ENCODE measurements at regions of chr3 and their contacts with region 1.

Region 1: DNA sequence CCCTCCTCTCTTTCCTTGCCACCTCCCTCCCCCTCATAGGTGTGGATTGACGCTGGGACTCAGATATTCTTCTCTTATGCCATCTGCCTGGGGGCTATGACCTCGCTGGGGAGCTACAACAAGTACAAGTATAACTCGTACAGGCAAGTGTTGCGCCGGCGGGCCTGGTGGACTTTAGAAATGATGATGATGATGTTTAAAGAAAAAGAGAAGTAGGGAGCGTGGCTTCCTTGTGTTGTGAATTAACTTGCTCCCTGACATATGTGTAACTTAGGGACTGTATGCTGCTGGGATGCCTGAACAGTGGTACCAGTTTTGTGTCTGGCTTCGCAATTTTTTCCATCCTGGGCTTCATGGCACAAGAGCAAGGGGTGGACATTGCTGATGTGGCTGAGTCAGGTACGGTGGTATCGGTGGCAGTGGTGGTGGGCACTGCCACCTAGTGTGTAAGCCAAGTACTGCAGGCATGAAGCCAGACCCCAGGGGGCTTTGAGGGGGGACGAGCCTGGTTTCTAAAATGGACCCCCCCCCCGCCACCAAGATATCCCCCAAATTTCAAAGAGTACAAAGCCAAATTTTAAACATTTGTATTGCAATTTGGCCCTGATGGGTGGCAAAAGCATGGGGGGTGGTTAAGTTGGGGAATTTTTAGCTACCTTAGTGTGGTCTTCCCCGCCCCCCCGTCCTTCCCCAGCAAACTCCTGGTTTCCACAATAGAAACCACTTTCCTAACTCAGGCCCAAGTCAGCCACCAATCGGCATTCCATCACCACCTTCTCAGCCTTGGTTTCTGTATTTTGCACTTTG is 65.6 kb downstream of the SLC6A6 start:
- DNase-seq: peak; percentile 92
- H3K4me3 ChIP-seq: peak overlapping the region in 1 of 2 experiments; percentile 23; a peak in 1 of 4 replicates
- H3K27ac ChIP-seq: no peak overlapping the region
- H3K4me1 ChIP-seq: peaks cover 4 to 19% of the 10 kb centered on the region in 2 experiments; a peak in 3 of 4 replicates
- H3K27me3 ChIP-seq: no peaks in the 10 kb centered on the region
- CTCF ChIP-seq: peak; percentile 95
- EP300 ChIP-seq: no peak
- RAD21 ChIP-seq: peak; percentile 93

Region 2: DNA sequence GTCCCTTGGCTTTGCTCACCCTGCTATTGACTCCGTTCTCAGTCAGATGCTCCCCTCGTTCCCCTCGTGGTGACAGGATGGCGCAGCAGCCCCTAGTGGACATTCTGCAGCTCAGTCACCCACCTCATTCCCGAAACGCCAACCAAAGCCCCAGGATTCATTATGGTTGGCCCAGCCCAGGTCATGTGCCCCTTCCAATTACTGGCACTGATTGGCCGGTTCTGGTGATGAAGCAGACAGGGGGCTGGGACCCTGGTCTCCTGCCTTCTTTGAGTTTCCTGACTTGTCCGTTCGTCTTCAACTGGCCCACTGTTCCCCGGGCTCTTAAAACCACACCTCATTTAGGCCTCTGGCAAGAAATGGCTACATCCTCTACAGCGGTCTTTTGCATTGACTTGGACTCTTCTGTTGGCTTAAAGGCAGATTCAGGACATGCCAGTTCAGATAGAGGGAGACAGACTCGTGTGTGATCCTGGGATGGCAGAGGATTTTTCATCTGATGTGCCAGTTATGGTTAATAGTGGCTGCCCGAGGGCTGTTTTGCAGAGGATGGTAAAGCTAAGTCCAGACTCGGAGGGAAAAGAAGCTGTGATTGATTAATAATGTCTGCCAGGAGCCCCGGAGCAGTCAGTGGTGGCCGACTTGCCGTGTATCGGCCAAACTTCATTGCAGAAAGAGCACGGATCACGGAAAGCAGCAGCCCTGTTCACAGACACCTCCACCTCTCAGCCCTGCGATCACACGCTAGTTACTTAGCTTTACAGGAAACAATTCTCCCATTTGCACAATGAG is 251.6 kb before region 1 on chr3:
- CTCF ChIA-PET with region 1: interaction called, 34 read pairs
- POLR2A ChIA-PET with region 1: no interaction called
- DNase-seq: peak; percentile 85
- H3K4me3 ChIP-seq: peak overlapping the region; percentile 50 to 55
- H3K27ac ChIP-seq: peak overlapping the region; percentile 52 to 96
- H3K4me1 ChIP-seq: peaks cover 0 to 4% of the 10 kb centered on the region in 2 experiments; a peak in 1 of 4 replicates
- H3K27me3 ChIP-seq: no peaks in the 10 kb centered on the region
- CTCF ChIP-seq: peak; percentile 60
- EP300 ChIP-seq: no peak; a peak in 1 of 4 replicates
- RAD21 ChIP-seq: peak; percentile 69

Region 3: DNA sequence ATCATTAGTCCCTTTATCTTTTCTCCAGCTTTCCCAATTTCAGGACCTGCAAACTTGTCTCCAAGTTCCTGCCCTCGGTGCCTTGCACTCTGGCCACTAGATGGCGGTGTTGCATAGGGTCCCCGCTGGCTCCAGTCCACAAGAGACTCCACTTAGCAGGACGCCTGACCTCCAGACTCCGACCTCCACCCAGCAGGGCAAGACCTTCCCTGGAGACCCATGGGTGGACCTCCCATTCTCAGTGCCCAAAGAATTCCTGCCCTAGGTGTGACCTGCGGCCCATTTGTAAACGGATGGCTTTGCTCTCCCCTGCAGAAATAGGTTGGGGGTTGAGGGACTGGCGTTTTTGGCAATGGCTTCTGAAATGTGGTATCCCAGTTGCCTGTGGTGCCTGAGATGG is 206.8 kb before region 1 on chr3:
- CTCF ChIA-PET with region 1: interaction called, 105 read pairs
- POLR2A ChIA-PET with region 1: no interaction called
- DNase-seq: peak; percentile 88
- H3K4me3 ChIP-seq: peak overlapping the region in 1 of 2 experiments; percentile 42; a peak in 1 of 4 replicates
- H3K27ac ChIP-seq: no peak overlapping the region
- H3K4me1 ChIP-seq: no peaks in the 10 kb centered on the region
- H3K27me3 ChIP-seq: 0 out of 2 replicates have a peak, but pooled peaks cover 6% of the 10 kb centered on the region
- CTCF ChIP-seq: peak; percentile 98
- EP300 ChIP-seq: no peak
- RAD21 ChIP-seq: peak; percentile 99

Region 4: GRCh38 chr3:14439579-14440518 is 28.2 kb before region 1 on chr3:
- CTCF ChIA-PET with region 1: interaction called, 10 read pairs
- POLR2A ChIA-PET with region 1: no interaction called
- DNase-seq: peak; percentile 87
- H3K4me3 ChIP-seq: no peak overlapping the region
- H3K27ac ChIP-seq: peak overlapping the region; percentile 1 to 3; a peak in 2 of 4 replicates
- H3K4me1 ChIP-seq: peaks cover 41 to 43% of the 10 kb centered on the region in 2 experiments
- H3K27me3 ChIP-seq: no peaks in the 10 kb centered on the region
- CTCF ChIP-seq: no peak
- EP300 ChIP-seq: peak in 1 of 2 experiments; percentile 54; a peak in 1 of 4 replicates
- RAD21 ChIP-seq: 0 out of 2 replicates have a peak, but pooled peaks have one; percentile 13

Region 5: GRCh38 chr3:14480207-14481025 is 12.4 kb after region 1 on chr3:
- CTCF ChIA-PET with region 1: interaction called, 43 read pairs
- POLR2A ChIA-PET with region 1: no interaction called
- DNase-seq: peak; percentile 53
- H3K4me3 ChIP-seq: no peak overlapping the region
- H3K27ac ChIP-seq: peak overlapping the region in 1 of 2 experiments; percentile 41; a peak in 1 of 4 replicates
- H3K4me1 ChIP-seq: peaks cover 0 to 14% of the 10 kb centered on the region in 2 experiments; a peak in 1 of 4 replicates
- H3K27me3 ChIP-seq: no peaks in the 10 kb centered on the region
- CTCF ChIP-seq: no peak
- EP300 ChIP-seq: no peak
- RAD21 ChIP-seq: no peak